ENCODE measurements at regions of chr11 and their contacts with region 1.

Region 1: GRCh38 chr11:61332797-61333549 is at the starts of genes DDB1 and TKFC:
- DNase-seq: peak; percentile 98
- total RNA-seq, gene DDB1: 125 TPM
- total RNA-seq, gene TKFC: 21.9 TPM

Region 2: GRCh38 chr11:61294717-61295595 is 38.0 kb before region 1 on chr11 and contains the start of gene VWCE:
- intact Hi-C with region 1: loop called (anchors 5 kb)
- DNase-seq: no peak
- total RNA-seq, gene VWCE: 0.59 TPM

Region 3: DNA sequence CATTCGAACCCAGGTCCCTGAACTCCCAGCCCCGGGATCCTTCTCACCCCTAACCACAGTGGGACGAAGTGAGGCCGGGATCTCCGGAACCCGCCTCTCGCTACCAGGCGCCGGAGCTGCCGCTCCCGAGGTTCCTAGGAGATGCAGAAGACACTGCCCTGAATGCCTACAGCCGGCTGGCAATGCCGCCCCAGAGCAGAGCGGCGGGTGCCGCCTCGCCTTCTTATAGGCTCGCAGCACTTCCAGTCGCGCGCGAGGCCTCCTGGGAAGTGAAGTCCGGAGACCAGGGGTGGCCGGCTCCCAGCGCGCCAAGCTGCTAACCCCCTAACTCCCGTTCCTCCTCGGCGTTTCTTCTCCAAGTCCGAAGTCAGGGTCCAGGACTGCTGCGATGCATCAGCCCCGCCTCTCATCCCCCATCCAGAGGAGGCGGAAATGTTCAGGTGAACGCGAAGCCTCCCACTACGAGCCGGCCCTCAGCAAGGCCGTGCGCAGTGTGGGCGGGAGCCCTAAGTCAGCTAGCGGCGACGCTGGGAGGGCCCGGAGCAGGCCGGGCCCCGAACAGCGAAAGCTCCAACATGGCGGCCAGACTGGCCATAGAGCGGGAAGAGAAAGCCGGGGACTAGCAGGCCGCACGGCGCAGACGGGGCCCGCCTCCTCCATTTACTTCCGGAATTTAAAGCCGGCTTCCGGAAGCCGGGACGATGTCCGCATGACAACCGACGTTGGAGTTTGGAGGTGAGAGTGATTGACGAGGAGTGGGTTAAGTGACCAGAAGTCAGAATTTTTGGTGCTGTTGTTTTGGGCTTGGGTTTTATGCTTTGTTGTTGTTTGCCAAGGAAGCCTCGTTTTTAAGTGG is 28.9 kb after region 1 on chr11 and contains the starts of genes CYB561A3 and TMEM138:
- intact Hi-C with region 1: loop called (anchors 1 kb)
- DNase-seq: peak; percentile 96
- total RNA-seq, gene CYB561A3: 11.2 TPM
- total RNA-seq, gene TMEM138: 17.9 TPM

Region 4: DNA sequence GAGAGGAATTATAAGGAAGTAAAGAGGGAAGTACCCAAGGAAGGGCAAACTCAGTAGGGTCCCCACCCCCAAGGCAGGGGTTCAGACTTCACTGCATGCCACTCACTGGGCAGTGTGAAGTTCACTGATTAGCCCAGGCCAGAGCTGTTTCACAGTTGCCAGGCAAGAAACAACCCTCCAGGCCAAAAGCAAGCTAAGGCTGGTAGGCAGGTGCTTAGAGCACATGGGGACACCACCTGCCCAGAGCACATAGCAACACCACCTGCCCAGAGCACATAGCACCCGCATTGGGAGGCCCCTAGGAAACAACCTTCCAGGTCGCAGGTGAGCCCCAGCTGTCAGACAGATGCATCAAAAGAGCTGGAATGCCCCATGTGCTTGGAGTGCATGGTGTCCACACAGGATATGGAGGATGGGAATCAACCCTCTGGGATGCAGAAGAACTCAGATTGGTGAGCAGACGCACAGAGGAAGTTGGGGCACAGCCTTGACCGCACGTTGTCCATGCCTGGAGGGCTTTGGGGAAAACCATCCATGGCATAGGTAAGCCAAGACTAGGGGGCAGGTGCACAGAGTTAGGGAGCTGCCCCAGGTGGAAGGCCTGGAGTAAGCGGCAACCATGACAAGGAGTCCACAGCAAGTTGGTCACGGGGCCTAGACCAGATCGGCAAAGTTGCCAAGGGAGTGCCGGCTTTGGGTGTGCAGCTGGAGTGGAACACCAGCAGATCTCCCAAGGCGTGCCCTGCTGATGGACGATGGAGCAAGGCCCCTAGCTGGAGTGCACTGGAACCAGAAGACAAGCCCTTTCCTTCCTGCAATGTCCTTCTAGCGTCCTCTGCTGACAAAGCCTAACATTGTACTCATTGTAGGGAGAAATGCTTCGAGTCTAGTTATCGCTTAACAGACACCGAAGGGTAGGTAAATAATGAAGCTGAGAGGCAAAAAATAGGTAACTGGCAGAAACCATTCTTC is 51.6 kb after region 1 on chr11:
- intact Hi-C with region 1: loop called (anchors 1 kb)
- DNase-seq: no peak

Measured in cardiac septum (tissue), 1 donor.